Activated B cell treated with CpG ODN at 0.5 μM for 24 hours (primary cell): ENCODE measurements at regions of chr2 and their contacts with region 1.

Region 1: GRCh38 chr2:113138428-113139322 is 11.3 kb downstream of the IL1RN start:
- DNase-seq: no peak
- ATAC-seq: peak; percentile 88
- H3K4me3 Mint-ChIP-seq: peak overlapping the region; percentile 55
- H3K27ac Mint-ChIP-seq: peak overlapping the region; percentile 73
- H3K4me1 Mint-ChIP-seq: peaks cover 17% of the 10 kb centered on the region
- H3K27me3 Mint-ChIP-seq: no peaks in the 10 kb centered on the region
- CTCF ChIP-seq: peak; percentile 51

Region 2: DNA sequence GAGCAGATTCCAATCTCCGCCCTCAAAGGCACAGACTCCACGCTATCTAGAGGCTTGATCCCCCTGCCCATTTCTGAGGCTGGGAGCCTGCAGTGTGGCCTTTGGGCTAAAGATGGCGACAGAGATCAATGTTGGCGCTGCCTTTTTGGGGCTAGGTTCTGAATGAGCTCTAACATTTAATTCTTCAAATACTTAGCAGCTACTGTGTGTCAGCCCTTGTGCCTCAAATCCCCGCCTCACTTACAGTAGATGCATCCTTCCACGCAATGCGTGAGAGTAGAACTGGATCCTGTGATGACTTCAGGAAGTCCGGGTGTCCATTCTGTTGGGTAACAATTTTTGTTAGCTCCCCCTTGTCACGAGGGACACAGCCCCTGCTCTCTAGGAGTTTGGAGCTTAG is 58.5 kb before region 1 on chr2:
- CTCF ChIA-PET with region 1: interaction called, 71 read pairs
- POLR2A ChIA-PET with region 1: no interaction called
- intact Hi-C with region 1: loop called (anchors 1 kb)
- DNase-seq: peak; percentile 31
- ATAC-seq: peak; percentile 82
- H3K4me3 Mint-ChIP-seq: no peak overlapping the region
- H3K27ac Mint-ChIP-seq: no peak overlapping the region
- H3K4me1 Mint-ChIP-seq: no peaks in the 10 kb centered on the region
- H3K27me3 Mint-ChIP-seq: peaks cover 24% of the 10 kb centered on the region
- CTCF ChIP-seq: peak; percentile 23

Region 3: DNA sequence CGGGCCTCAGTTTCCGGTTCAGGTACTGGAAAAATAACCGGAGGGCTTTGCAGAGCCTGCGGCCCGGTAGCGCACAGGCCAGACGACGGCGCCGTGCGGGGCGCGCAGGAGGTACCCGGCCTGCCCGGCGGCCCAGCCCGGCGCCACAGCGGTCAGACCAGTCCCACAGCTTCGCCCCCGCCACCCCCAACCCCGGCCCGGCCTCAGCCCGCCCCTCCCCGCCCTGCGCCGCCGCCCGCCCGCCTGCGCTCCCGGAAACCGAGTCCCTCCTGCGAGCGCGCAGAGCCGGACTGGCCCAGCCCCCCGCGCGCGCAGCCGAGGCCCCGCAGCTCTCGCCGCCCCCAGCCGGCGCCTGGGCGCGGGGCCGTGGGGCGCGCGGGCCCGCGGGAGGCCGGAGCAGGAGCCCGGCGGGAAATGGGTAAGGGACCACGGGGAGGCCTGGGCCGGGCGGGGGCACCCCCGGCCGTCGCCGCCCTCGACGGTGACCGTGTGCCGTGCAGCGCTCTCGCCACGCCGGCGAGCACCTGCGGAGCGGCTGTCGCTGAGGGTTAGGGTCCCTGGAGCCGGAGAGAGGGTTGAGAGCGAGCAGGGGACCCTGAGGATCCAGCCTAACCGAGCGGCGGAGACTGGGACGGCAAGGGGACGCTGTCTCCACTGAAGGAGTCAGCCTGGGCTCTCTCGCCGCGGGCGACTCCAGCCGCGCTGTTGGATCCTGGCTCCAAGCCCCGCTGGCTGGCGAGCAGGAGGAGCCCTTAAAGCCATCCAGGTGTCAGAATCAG is 18.6 kb after region 1 on chr2:
- CTCF ChIA-PET with region 1: interaction called, 23 read pairs
- POLR2A ChIA-PET with region 1: interaction called, 16 read pairs
- intact Hi-C with region 1: loop called (anchors 2 kb)
- DNase-seq: peak; percentile 57
- ATAC-seq: peak; percentile 90
- H3K4me3 Mint-ChIP-seq: peak overlapping the region; percentile 84
- H3K27ac Mint-ChIP-seq: peak overlapping the region; percentile 70
- H3K4me1 Mint-ChIP-seq: peaks cover 17% of the 10 kb centered on the region
- H3K27me3 Mint-ChIP-seq: no peaks in the 10 kb centered on the region
- CTCF ChIP-seq: no peak

Region 4: DNA sequence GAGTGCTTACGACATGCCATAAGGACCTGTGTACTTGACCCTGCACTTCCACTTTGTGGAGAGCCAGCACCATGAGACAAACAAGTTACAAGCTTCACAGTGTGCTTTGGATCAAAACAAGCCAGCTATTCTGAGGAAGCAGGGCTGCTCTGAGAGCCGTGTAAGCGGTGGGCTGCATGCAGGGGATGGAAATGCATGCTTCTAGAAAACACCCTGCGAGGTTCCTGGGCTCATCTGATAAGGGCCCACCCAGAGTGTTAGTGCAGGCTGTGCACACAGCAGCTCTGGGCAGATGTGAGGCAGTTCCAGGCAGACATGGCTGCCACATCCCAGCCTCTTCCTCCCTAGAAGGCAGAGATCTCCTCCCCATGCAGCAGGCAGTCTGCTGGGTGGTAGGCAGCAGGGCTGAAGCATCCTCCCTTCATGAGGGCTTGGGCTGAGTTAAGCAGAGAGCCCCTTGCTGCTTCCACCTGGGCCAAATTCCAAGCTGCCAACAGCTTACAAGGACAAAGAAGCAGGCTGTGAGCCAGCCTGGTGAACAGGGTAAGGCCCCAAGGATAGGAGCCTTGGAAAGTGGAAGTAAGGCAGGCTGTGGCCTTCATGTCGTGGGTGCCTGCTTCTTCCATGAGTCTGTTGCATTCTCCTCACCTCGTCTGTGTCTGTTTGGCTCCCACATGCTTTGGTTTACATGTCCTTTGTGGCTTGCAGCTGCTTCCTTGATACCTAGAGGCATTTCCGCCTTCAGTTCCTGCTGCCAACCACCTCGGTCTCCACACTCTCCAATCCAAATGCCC is 42.8 kb after region 1 on chr2:
- CTCF ChIA-PET with region 1: interaction called, 120 read pairs
- POLR2A ChIA-PET with region 1: interaction called, 33 read pairs
- intact Hi-C with region 1: loop called (anchors 1 kb)
- DNase-seq: no peak
- ATAC-seq: no peak
- H3K4me3 Mint-ChIP-seq: no peak overlapping the region
- H3K27ac Mint-ChIP-seq: peak overlapping the region; percentile 19
- H3K4me1 Mint-ChIP-seq: peaks cover 90% of the 10 kb centered on the region
- H3K27me3 Mint-ChIP-seq: no peaks in the 10 kb centered on the region
- CTCF ChIP-seq: no peak

Region 5: GRCh38 chr2:113203901-113204519 is 65.3 kb after region 1 on chr2:
- CTCF ChIA-PET with region 1: interaction called, 319 read pairs
- POLR2A ChIA-PET with region 1: interaction called, 26 read pairs
- intact Hi-C with region 1: loop called (anchors 1 kb)
- DNase-seq: peak; percentile 54
- ATAC-seq: peak; percentile 78
- H3K4me3 Mint-ChIP-seq: no peak overlapping the region
- H3K27ac Mint-ChIP-seq: peak overlapping the region; percentile 74
- H3K4me1 Mint-ChIP-seq: peaks cover 16% of the 10 kb centered on the region
- H3K27me3 Mint-ChIP-seq: no peaks in the 10 kb centered on the region
- CTCF ChIP-seq: peak; percentile 27

Region 6: GRCh38 chr2:113370478-113371091 is 231.9 kb after region 1 on chr2:
- CTCF ChIA-PET with region 1: interaction called, 17 read pairs
- POLR2A ChIA-PET with region 1: no interaction called
- intact Hi-C with region 1: loop called (anchors 1 kb)
- DNase-seq: peak; percentile 24
- ATAC-seq: peak; percentile 89
- H3K4me3 Mint-ChIP-seq: no peak overlapping the region
- H3K27ac Mint-ChIP-seq: no peak overlapping the region
- H3K4me1 Mint-ChIP-seq: peaks cover 33% of the 10 kb centered on the region
- H3K27me3 Mint-ChIP-seq: no peaks in the 10 kb centered on the region
- CTCF ChIP-seq: no peak